Lower leg skin (tissue), 4 donors: ENCODE measurements at regions of chr6 and their contacts with region 1.

Region 1: DNA sequence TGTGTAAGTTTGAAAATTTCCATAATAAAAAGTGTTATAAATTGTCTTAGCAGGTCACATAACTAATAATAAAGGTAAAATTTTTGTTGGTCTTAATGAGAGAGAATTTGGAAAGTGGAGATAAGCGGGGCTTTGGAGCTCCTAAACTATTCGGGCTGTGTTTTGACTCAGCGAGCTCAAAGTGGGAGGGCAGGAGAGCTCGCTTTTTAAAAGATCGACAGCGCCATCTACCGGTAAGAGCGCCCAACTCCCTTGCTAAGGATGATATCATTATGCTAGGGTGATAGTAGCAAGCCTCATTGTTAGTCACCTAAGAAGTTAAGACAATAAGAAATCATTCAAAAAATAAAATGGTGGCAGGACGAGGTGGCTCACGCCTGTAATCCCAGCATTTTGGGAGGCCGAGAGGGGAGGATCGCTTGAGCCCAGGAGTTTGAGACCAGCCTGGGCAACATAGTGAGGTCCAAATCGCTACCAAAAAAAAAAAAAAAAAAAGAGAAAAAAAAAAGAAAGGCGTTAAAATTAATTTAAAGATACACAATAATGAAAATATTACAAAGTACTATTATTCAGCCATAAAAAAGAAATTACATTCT is 24.8 kb downstream of the C6orf15 start:
- DNase-seq: peak; percentile 83 to 96
- H3K4me3 ChIP-seq: no peak overlapping the region
- CTCF ChIP-seq: peak in 1 of 3 donors; percentile 40
- POLR2A ChIP-seq: no peak

Region 2: GRCh38 chr6:30810813-30811329 is 276.7 kb before region 1 on chr6:
- intact Hi-C with region 1: no loop called
- DNase-seq: peak in 1 of 2 donors; percentile 64
- H3K4me3 ChIP-seq: no peak overlapping the region
- CTCF ChIP-seq: no peak
- POLR2A ChIP-seq: no peak

Region 3: GRCh38 chr6:30828027-30828960 is 259.3 kb before region 1 on chr6:
- intact Hi-C with region 1: loop called (anchors 5 kb)
- DNase-seq: peak; percentile 91 to 98
- H3K4me3 ChIP-seq: no peak overlapping the region
- CTCF ChIP-seq: peak in 2 of 3 donors; percentile 48 to 90
- POLR2A ChIP-seq: no peak

Region 4: GRCh38 chr6:30926644-30927043 is 160.9 kb before region 1 on chr6:
- intact Hi-C with region 1: loop called (anchors 10 kb)
- DNase-seq: no peak
- H3K4me3 ChIP-seq: no peak overlapping the region
- CTCF ChIP-seq: no peak
- POLR2A ChIP-seq: no peak